ENCODE measurements at regions of chr2 and their contacts with region 1.

Region 1: DNA sequence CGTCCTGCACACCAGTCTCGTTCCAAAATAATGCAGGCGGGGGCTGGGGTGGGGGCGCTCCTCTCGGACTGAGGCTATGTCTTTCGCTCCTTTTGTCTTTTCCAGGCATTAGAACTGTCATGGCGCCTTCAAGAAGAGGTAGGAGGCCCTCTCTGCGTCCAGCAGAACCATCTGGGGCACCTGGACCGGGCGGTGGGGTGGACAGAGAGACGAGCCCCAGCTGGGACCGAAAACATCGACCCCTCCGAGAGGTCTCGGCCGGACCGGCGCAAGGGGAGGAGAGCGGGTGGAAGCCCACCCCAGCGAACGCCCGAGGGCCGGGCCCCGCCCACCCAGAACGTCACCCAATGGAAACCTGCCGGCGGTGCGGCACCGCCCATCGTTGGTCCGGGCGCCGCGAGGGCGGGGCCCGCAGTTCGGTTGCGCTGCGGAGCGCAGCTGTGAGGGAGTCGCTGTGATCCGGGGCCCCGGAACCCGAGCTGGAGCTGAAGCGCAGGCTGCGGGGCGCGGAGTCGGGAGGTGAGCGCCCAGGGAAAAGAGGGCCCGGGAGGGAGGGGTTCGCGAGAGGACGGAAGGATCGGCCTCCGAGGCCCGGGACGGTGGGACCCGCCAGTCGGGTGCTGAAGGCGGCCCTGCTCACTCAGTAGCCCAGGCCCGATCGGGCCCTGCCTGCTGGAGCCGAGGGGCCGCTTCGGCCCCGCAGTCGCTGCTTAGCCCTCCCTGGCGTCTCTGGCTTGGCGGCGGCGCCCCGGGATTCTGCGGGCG is at the start of gene NRBP1:
- DNase-seq: peak; percentile 83 to 92 (median 90)
- H3K4me3 ChIP-seq: peak within 1 kb of the TSS; percentile 90
- H3K4me3 Mint-ChIP-seq: peak within 1 kb of the TSS; percentile 98 to 99 (median 98)
- H3K27ac ChIP-seq: peak within 1 kb of the TSS; percentile 90
- H3K27ac Mint-ChIP-seq: peak within 1 kb of the TSS; percentile 96 to 99 (median 97)
- H3K4me1 ChIP-seq: peaks cover 29% of the 10 kb centered on the region
- H3K4me1 Mint-ChIP-seq: peaks cover 36 to 48% (median 45%) of the 10 kb centered on the region in 3 donors
- H3K27me3 ChIP-seq: no peaks in the 10 kb centered on the region
- H3K27me3 Mint-ChIP-seq: no peaks in the 10 kb centered on the region
- total RNA-seq, gene NRBP1: 77.2 to 81.0 TPM

Region 2: DNA sequence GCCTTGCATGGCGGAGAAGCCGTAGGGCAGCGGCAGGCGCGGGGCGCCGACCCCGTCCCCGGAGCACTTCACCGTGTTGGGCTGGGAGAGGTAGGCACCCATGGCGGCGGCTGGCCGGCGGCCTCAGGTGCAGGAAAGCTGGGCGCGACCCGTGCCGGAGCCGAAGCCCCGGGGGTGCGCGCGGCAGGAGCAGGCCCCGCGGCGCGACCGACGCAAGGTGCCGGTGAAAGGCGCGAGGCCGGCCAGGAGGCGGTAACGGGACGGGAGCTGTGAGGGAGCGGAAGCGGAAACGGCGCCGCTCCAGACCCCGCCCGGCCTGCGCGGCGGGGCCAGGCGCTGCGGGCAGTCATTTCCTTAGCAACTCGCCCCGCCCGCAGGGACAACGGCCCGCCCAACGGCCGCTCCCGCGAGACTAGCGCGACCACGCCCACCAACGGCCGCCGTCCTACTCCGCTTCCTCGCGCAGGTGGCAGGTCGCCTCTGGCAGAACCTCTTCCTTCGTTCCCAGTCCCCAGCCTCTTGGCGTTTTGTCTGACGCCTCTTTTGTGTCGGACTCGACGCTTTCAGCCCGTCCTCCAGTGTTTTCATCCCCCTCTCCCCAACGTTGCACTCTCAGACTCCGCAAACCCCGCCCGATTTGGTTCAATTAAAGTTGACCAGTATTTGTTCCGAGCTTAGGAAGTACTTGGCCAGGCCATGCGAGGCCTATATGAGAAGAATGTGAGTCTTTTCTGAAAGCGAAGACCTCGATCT is 18.9 kb before region 1 on chr2 and contains the start of gene PPM1G:
- CTCF ChIA-PET with region 1: interaction called, 8 read pairs
- POLR2A ChIA-PET with region 1: interaction called, 25 read pairs
- DNase-seq: peak; percentile 94 to 97 (median 95)
- H3K4me3 ChIP-seq: peak within 1 kb of the TSS; percentile 66
- H3K4me3 Mint-ChIP-seq: peak within 1 kb of the TSS; percentile 81 to 96 (median 90)
- H3K27ac ChIP-seq: peak within 1 kb of the TSS; percentile 86
- H3K27ac Mint-ChIP-seq: peak within 1 kb of the TSS; percentile 88 to 96 (median 94)
- H3K4me1 ChIP-seq: peaks cover 34% of the 10 kb centered on the region
- H3K4me1 Mint-ChIP-seq: peaks cover 31 to 48% (median 40%) of the 10 kb centered on the region in 3 donors
- H3K27me3 ChIP-seq: no peaks in the 10 kb centered on the region
- H3K27me3 Mint-ChIP-seq: peaks cover 0 to 10% of the 10 kb centered on the region in 2 donors
- total RNA-seq, gene PPM1G: 189 to 191 TPM